ENCODE measurements at regions of chr11 and their contacts with region 1.

Region 1: GRCh38 chr11:111841370-111842053 is 29.9 kb downstream of the ALG9 start:
- DNase-seq: peak; percentile 89 to 94
- ATAC-seq: peak; percentile 94
- H3K4me3 ChIP-seq: no peak overlapping the region
- H3K27ac ChIP-seq: no peak overlapping the region
- H3K4me1 ChIP-seq: no peaks in the 10 kb centered on the region
- H3K27me3 ChIP-seq: no peaks in the 10 kb centered on the region

Region 2: DNA sequence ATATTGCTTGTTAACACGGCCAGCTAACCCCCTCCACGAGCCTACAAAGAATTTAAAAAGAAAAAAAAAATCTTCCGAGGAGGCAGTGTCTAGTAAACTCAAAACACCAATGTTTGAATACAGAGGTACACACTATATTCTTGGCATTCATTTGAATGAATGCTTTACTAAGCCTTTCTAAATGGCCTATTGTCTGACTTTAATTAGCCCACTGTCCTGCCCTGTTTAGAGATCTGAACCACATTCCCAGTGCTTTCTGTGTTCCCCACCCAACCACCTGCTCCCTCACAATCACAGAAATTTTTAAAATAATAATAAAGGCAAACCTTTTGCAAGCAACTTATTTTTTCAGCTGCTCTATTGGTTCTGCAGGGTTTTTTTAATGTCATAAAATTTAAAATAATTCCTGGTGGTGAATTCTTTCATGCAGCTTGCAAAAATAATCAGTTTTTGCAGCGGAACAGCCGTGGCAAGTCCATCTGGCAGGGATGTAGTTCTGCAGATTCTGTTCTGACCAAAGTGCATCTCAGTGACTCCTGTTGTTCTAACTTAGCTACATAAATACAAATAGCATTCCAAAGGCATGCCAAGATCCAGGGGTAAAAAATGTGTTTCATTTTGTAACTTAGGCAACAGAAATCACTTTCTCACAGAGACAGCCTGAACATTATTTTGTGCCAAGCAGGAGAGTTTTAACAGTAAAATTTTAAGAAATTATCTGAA is 572.2 kb before region 1 on chr11:
- intact Hi-C with region 1: no loop called
- DNase-seq: no peak
- ATAC-seq: no peak
- H3K4me3 ChIP-seq: no peak overlapping the region
- H3K27ac ChIP-seq: no peak overlapping the region
- H3K4me1 ChIP-seq: peaks cover 0 to 4% of the 10 kb centered on the region in 2 donors
- H3K27me3 ChIP-seq: no peaks in the 10 kb centered on the region

Region 3: GRCh38 chr11:111565114-111565720 is 276.3 kb before region 1 on chr11:
- intact Hi-C with region 1: loop called (anchors 1 to 2 kb)
- DNase-seq: peak in 1 of 2 donors; percentile 56
- ATAC-seq: peak; percentile 53
- H3K4me3 ChIP-seq: no peak overlapping the region
- H3K27ac ChIP-seq: no peak overlapping the region
- H3K4me1 ChIP-seq: no peaks in the 10 kb centered on the region
- H3K27me3 ChIP-seq: no peaks in the 10 kb centered on the region

Region 4: DNA sequence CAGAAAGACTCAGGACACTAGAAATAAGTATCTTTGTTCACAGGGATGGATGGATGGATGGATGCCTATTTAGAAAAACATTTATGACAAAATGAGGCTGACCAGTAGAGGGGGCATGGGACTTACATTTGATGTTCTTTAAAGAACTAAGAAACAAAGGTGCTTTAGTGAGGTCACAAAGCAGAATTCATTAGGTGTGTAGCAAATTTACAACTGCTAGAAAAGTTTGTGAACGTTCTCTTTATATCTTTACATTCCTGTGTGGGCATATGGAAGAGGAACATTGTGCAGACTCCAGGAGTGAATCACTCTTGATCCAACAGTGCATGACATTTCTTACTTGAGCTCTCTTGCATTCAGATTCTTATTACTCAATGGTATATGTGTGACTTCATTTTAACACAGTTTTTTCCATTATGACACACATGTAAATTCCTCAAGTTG is 255.1 kb before region 1 on chr11:
- intact Hi-C with region 1: loop called in 1 of 2 experiments (anchors 5 kb)
- DNase-seq: no peak
- ATAC-seq: no peak
- H3K4me3 ChIP-seq: no peak overlapping the region
- H3K27ac ChIP-seq: no peak overlapping the region
- H3K4me1 ChIP-seq: no peaks in the 10 kb centered on the region
- H3K27me3 ChIP-seq: no peaks in the 10 kb centered on the region

Region 5: GRCh38 chr11:111601979-111602864 is 239.3 kb before region 1 on chr11 and contains the start of gene SIK2:
- intact Hi-C with region 1: loop called (anchors 5 kb)
- DNase-seq: peak; percentile 96 to 97
- ATAC-seq: peak; percentile 97
- H3K4me3 ChIP-seq: peak within 1 kb of the TSS; percentile 77 to 89
- H3K27ac ChIP-seq: peak within 1 kb of the TSS in 1 of 2 donors; percentile 56
- H3K4me1 ChIP-seq: no peaks in the 10 kb centered on the region
- H3K27me3 ChIP-seq: no peaks in the 10 kb centered on the region
- total RNA-seq, gene SIK2: 13.0 to 21.9 TPM

Region 6: DNA sequence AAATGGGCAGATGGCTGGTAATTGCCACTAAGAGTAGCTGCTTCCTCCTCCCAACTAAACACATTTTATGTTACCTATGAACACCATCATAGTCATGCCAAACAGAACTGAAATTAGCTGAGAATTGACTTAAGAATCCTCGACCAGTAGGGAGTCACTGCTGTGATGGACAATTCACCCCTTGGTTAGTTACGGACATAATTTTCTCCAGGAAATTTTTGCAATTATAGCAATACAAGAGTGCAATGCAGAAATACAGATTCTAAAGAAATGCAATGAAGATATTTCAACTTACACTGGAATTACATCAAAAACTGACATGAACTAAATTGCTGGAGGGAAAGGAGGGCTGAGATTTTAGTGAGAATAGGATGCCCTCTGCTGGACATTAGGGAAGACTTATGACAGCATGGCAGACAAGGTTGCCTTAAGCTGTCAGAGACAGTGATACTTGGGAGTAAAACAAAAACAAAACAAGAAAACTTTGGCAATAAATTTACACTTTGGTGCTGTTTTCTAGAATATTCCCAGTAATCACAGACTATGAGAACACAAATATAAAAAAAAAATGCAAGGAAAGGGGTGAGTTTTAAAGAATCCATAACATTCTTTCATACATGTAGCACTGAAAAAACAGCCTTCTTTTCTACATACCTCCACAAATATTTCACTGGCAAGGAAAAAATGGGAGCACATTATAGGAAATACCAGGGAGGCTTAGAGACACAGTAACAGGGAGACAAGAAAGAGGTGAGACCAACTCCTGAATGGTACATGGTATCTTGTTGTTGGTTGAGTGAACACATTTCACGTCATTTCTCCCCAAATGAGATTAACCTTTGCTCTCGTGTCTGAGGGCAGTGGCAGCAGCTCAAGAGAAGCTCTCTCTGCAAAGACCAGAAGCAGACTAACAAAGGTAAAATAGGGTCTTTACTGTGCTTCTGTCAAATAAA is 64.1 kb before region 1 on chr11:
- intact Hi-C with region 1: loop called in 1 of 2 experiments (anchors 5 kb)
- DNase-seq: no peak
- ATAC-seq: peak; percentile 87
- H3K4me3 ChIP-seq: no peak overlapping the region
- H3K27ac ChIP-seq: no peak overlapping the region
- H3K4me1 ChIP-seq: peaks cover 0 to 1% of the 10 kb centered on the region in 2 donors
- H3K27me3 ChIP-seq: no peaks in the 10 kb centered on the region

Region 7: GRCh38 chr11:111788051-111788450 is 53.5 kb before region 1 on chr11:
- intact Hi-C with region 1: loop called in 1 of 2 experiments (anchors 5 kb)
- DNase-seq: no peak
- ATAC-seq: no peak
- H3K4me3 ChIP-seq: no peak overlapping the region
- H3K27ac ChIP-seq: peak overlapping the region in 1 of 2 donors; percentile 57
- H3K4me1 ChIP-seq: peaks cover 0 to 3% of the 10 kb centered on the region in 2 donors
- H3K27me3 ChIP-seq: no peaks in the 10 kb centered on the region